ENCODE measurements at regions of chr1 and their contacts with region 1.

Region 1: GRCh38 chr1:109532365-109533136 is 7.1 kb upstream of the GPR61 start:
- DNase-seq: peak; percentile 94
- H3K4me3 Mint-ChIP-seq: peak overlapping the region; percentile 59
- H3K27ac Mint-ChIP-seq: peak overlapping the region; percentile 81
- H3K4me1 Mint-ChIP-seq: peaks cover 20% of the 10 kb centered on the region
- H3K27me3 Mint-ChIP-seq: no peaks in the 10 kb centered on the region

Region 2: GRCh38 chr1:109201123-109201703 is 331.3 kb before region 1 on chr1:
- CTCF ChIA-PET with region 1: interaction called, 33 read pairs
- POLR2A ChIA-PET with region 1: no interaction called
- intact Hi-C with region 1: loop called (anchors 2 kb)
- DNase-seq: peak; percentile 88
- H3K4me3 Mint-ChIP-seq: no peak overlapping the region
- H3K27ac Mint-ChIP-seq: no peak overlapping the region
- H3K4me1 Mint-ChIP-seq: peaks cover 22% of the 10 kb centered on the region
- H3K27me3 Mint-ChIP-seq: no peaks in the 10 kb centered on the region

Region 3: GRCh38 chr1:109263597-109264398 is 268.8 kb before region 1 on chr1:
- CTCF ChIA-PET with region 1: interaction called, 24 read pairs
- POLR2A ChIA-PET with region 1: no interaction called
- intact Hi-C with region 1: loop called (anchors 1 kb)
- DNase-seq: peak; percentile 86
- H3K4me3 Mint-ChIP-seq: no peak overlapping the region
- H3K27ac Mint-ChIP-seq: no peak overlapping the region
- H3K4me1 Mint-ChIP-seq: peaks cover 1% of the 10 kb centered on the region
- H3K27me3 Mint-ChIP-seq: no peaks in the 10 kb centered on the region

Region 4: GRCh38 chr1:109397538-109398342 is 134.8 kb before region 1 on chr1 and contains the start of gene SORT1:
- CTCF ChIA-PET with region 1: interaction called, 56 read pairs
- POLR2A ChIA-PET with region 1: no interaction called
- intact Hi-C with region 1: loop called (anchors 2 kb)
- DNase-seq: peak; percentile 65
- H3K4me3 Mint-ChIP-seq: peak within 1 kb of the TSS; percentile 65
- H3K27ac Mint-ChIP-seq: no peak within 1 kb of the TSS
- H3K4me1 Mint-ChIP-seq: peaks cover 7% of the 10 kb centered on the region
- H3K27me3 Mint-ChIP-seq: peaks cover 37% of the 10 kb centered on the region
- total RNA-seq, gene SORT1: 0.31 to 0.51 TPM

Region 5: DNA sequence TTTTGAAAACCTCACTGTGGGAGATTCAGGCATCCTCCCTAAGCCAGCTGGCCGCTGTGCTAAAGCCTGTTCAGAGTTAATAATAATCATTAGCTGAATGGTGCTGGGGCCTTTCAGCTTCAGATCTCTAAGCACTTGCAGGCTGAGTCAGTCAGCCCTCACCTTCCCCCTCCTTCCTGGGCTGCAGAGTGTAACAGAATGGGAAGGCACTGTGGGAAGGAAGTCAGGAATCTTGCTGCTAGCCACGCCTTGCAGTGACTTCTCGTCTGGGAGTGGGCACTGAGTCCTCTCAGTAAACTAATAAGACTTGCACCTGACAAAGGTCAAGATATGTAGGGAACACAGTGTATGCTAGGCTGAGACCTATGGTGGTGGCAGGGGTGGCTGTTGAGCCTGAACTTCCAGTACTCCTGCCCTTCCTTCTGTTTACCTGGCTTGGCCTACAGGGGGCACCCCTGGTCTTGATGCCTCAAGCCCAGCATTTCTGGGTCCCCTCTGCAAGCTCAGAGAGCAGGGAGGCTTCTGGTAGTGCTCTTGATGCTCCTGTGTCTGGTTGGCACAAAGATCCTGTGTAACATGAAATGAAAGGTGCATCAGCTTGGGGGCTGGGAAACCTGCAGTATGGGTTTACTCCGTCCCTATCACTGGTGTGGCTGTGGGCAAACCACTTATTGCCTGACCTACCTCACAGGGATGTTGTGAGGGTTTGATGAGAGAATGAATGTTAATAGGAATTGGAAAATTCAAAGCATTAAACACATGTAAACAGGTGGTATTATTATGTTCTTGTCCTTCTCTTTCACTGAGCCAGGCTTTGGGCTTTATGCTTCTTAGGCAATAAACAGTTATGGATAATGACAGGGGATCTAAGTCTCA is 32.7 kb before region 1 on chr1:
- CTCF ChIA-PET with region 1: interaction called, 1,096 read pairs
- POLR2A ChIA-PET with region 1: interaction called, 21 read pairs
- intact Hi-C with region 1: loop called (anchors 1 kb)
- DNase-seq: peak; percentile 70
- H3K4me3 Mint-ChIP-seq: no peak overlapping the region
- H3K27ac Mint-ChIP-seq: peak overlapping the region; percentile 38
- H3K4me1 Mint-ChIP-seq: peaks cover 88% of the 10 kb centered on the region
- H3K27me3 Mint-ChIP-seq: no peaks in the 10 kb centered on the region

Region 6: GRCh38 chr1:109636201-109636952 is 103.8 kb after region 1 on chr1:
- CTCF ChIA-PET with region 1: interaction called, 14 read pairs
- POLR2A ChIA-PET with region 1: no interaction called
- intact Hi-C with region 1: no loop called
- DNase-seq: no peak
- H3K4me3 Mint-ChIP-seq: no peak overlapping the region
- H3K27ac Mint-ChIP-seq: no peak overlapping the region
- H3K4me1 Mint-ChIP-seq: peaks cover 18% of the 10 kb centered on the region
- H3K27me3 Mint-ChIP-seq: no peaks in the 10 kb centered on the region